ENCODE measurements at regions of chr3 and their contacts with region 1.

Region 1: GRCh38 chr3:170221924-170222646 is at the start of gene PRKCI:
- DNase-seq: peak; percentile 95
- H3K4me3 Mint-ChIP-seq: peak within 1 kb of the TSS; percentile 78
- H3K27ac Mint-ChIP-seq: peak within 1 kb of the TSS; percentile 92
- H3K4me1 Mint-ChIP-seq: peaks cover 24% of the 10 kb centered on the region
- H3K27me3 Mint-ChIP-seq: no peaks in the 10 kb centered on the region
- total RNA-seq, gene PRKCI: 20.8 to 23.0 TPM

Region 2: GRCh38 chr3:169772897-169773828 is 448.9 kb before region 1 on chr3 and contains the start of gene MYNN:
- CTCF ChIA-PET with region 1: no interaction called
- intact Hi-C with region 1: loop called (anchors 1 kb)
- DNase-seq: peak; percentile 94
- H3K4me3 Mint-ChIP-seq: peak within 1 kb of the TSS; percentile 94
- H3K27ac Mint-ChIP-seq: peak within 1 kb of the TSS; percentile 97
- H3K4me1 Mint-ChIP-seq: peaks cover 36% of the 10 kb centered on the region
- H3K27me3 Mint-ChIP-seq: no peaks in the 10 kb centered on the region
- total RNA-seq, gene MYNN: 12.0 to 13.5 TPM

Region 3: GRCh38 chr3:170037463-170038433 is 184.3 kb before region 1 on chr3 and contains the start of gene GPR160:
- CTCF ChIA-PET with region 1: no interaction called
- intact Hi-C with region 1: loop called (anchors 1 kb)
- DNase-seq: peak; percentile 89
- H3K4me3 Mint-ChIP-seq: peak within 1 kb of the TSS; percentile 84
- H3K27ac Mint-ChIP-seq: no peak within 1 kb of the TSS
- H3K4me1 Mint-ChIP-seq: peaks cover 24% of the 10 kb centered on the region
- H3K27me3 Mint-ChIP-seq: no peaks in the 10 kb centered on the region
- total RNA-seq, gene GPR160: 10.3 TPM

Region 4: GRCh38 chr3:170189398-170190256 is 32.5 kb before region 1 on chr3:
- CTCF ChIA-PET with region 1: interaction called, 4 read pairs
- intact Hi-C with region 1: loop called (anchors 1 kb)
- DNase-seq: no peak
- H3K4me3 Mint-ChIP-seq: no peak overlapping the region
- H3K27ac Mint-ChIP-seq: no peak overlapping the region
- H3K4me1 Mint-ChIP-seq: peaks cover 11% of the 10 kb centered on the region
- H3K27me3 Mint-ChIP-seq: peaks cover 5% of the 10 kb centered on the region

Region 5: GRCh38 chr3:170257145-170257544 is 35.1 kb after region 1 on chr3:
- CTCF ChIA-PET with region 1: no interaction called
- intact Hi-C with region 1: loop called (anchors 1 kb)
- DNase-seq: peak; percentile 58
- H3K4me3 Mint-ChIP-seq: no peak overlapping the region
- H3K27ac Mint-ChIP-seq: no peak overlapping the region
- H3K4me1 Mint-ChIP-seq: peaks cover 41% of the 10 kb centered on the region
- H3K27me3 Mint-ChIP-seq: no peaks in the 10 kb centered on the region

Region 6: GRCh38 chr3:170611751-170612150 is 389.7 kb after region 1 on chr3:
- CTCF ChIA-PET with region 1: no interaction called
- intact Hi-C with region 1: no loop called
- DNase-seq: no peak
- H3K4me3 Mint-ChIP-seq: no peak overlapping the region
- H3K27ac Mint-ChIP-seq: no peak overlapping the region
- H3K4me1 Mint-ChIP-seq: no peaks in the 10 kb centered on the region
- H3K27me3 Mint-ChIP-seq: peaks cover 2% of the 10 kb centered on the region

Region 7: GRCh38 chr3:170622369-170623159 is 400.5 kb after region 1 on chr3:
- CTCF ChIA-PET with region 1: no interaction called
- intact Hi-C with region 1: no loop called
- DNase-seq: no peak
- H3K4me3 Mint-ChIP-seq: no peak overlapping the region
- H3K27ac Mint-ChIP-seq: no peak overlapping the region
- H3K4me1 Mint-ChIP-seq: no peaks in the 10 kb centered on the region
- H3K27me3 Mint-ChIP-seq: peaks cover 12% of the 10 kb centered on the region

Region 8: DNA sequence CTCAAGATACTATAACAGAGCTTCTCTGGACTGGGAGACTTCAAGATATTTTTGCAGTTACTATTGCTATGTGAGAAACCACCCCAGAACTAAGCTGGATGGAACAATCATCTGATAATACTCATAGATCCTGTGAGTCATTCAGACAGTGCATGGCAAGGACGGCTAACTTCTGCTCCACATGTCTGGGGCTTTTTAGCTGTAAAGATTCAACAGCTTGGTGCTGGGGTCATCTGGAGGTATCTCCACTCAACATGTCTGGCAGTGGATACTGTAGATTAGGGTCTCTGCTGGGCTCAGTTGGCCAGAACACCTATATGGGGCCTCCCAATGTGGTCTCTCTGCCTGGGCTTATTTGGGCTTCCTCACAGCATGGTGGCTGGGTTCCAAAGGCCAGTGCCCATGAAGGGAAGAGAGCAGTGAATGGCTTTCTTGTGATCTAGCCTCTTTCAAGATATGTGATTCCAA is 481.1 kb after region 1 on chr3:
- CTCF ChIA-PET with region 1: no interaction called
- intact Hi-C with region 1: no loop called
- DNase-seq: no peak
- H3K4me3 Mint-ChIP-seq: no peak overlapping the region
- H3K27ac Mint-ChIP-seq: no peak overlapping the region
- H3K4me1 Mint-ChIP-seq: no peaks in the 10 kb centered on the region
- H3K27me3 Mint-ChIP-seq: peaks cover 8% of the 10 kb centered on the region

Region 9: GRCh38 chr3:170909129-170910005 is 687.3 kb after region 1 on chr3:
- CTCF ChIA-PET with region 1: no interaction called
- intact Hi-C with region 1: no loop called
- DNase-seq: no peak
- H3K4me3 Mint-ChIP-seq: no peak overlapping the region
- H3K27ac Mint-ChIP-seq: no peak overlapping the region
- H3K4me1 Mint-ChIP-seq: peaks cover 22% of the 10 kb centered on the region
- H3K27me3 Mint-ChIP-seq: no peaks in the 10 kb centered on the region

Region 10: GRCh38 chr3:171491361-171491760 is 1269.3 kb after region 1 on chr3:
- CTCF ChIA-PET with region 1: no interaction called
- intact Hi-C with region 1: loop called (anchors 5 kb)
- DNase-seq: no peak
- H3K4me3 Mint-ChIP-seq: peak overlapping the region; percentile 51
- H3K27ac Mint-ChIP-seq: peak overlapping the region; percentile 62
- H3K4me1 Mint-ChIP-seq: peaks cover 34% of the 10 kb centered on the region
- H3K27me3 Mint-ChIP-seq: no peaks in the 10 kb centered on the region